Activated CD4-positive, alpha-beta memory T cell treated with anti-CD3 and anti-CD28 coated beads for 36 hours (primary cell): ENCODE measurements at regions of chr16 and their contacts with region 1.

Region 1: GRCh38 chr16:2213817-2214720 is 571 bp downstream of the PGP start:
- DNase-seq: peak; percentile 27
- H3K4me3 Mint-ChIP-seq: peak overlapping the region; percentile 76
- H3K27ac Mint-ChIP-seq: no peak overlapping the region
- H3K4me1 Mint-ChIP-seq: peaks cover 20% of the 10 kb centered on the region
- H3K27me3 Mint-ChIP-seq: no peaks in the 10 kb centered on the region

Region 2: GRCh38 chr16:2194852-2195321 is 19.2 kb before region 1 on chr16:
- CTCF ChIA-PET with region 1: interaction called, 11 read pairs
- POLR2A ChIA-PET with region 1: interaction called, 6 read pairs
- intact Hi-C with region 1: no loop called
- DNase-seq: peak; percentile 67
- H3K4me3 Mint-ChIP-seq: no peak overlapping the region
- H3K27ac Mint-ChIP-seq: no peak overlapping the region
- H3K4me1 Mint-ChIP-seq: peaks cover 4% of the 10 kb centered on the region
- H3K27me3 Mint-ChIP-seq: peaks cover 28% of the 10 kb centered on the region

Region 3: DNA sequence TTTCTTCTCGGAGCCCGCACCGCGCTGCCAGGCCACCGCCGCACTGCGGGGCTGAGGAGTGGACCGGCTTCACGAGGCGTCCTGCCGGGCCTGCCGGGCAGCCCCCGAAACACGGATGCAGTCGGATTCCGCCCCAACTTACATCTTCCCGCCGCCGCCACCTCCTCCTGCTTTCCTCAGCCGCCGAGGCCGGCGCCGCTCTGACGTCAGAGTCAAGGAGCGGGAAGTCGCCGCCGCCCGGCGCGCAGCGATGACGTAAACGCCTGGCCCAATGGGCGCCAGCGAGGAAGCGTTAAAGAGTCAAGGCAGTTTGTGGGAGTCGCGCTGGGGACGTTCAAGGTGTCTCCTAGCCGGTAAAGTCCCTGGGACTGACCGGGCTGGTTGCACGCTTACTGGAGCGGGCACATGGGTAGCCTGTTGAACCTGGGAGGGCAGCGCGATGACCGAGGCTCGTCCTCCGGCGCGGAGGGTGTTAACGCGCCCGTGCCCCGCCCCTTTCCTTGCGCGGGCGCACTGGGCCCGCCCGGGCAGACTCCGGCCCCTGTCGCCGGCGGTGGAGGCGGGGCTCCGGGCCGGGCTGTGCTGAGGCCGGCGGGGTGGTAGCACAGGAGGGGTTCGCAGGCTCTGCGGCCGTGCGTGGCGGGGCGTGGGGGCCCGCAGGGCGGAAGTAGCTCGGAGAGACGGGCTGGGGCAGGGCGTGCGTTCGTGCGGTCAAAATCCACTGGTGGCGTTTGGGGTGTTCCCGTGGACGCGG is 54.0 kb after region 1 on chr16 and contains the start of gene RNPS1:
- CTCF ChIA-PET with region 1: no interaction called
- POLR2A ChIA-PET with region 1: interaction called, 5 read pairs
- intact Hi-C with region 1: loop called (anchors 2 kb)
- DNase-seq: peak; percentile 97
- H3K4me3 Mint-ChIP-seq: peak within 1 kb of the TSS; percentile 88
- H3K27ac Mint-ChIP-seq: peak within 1 kb of the TSS; percentile 97
- H3K4me1 Mint-ChIP-seq: peaks cover 35% of the 10 kb centered on the region
- H3K27me3 Mint-ChIP-seq: no peaks in the 10 kb centered on the region
- total RNA-seq, gene RNPS1: 292 to 294 TPM